Activated B cell treated with CpG ODN at 0.5 μM for 24 hours (primary cell): ENCODE measurements at regions of chr12 and their contacts with region 1.

Region 1: GRCh38 chr12:25195056-25195971 is at the starts of genes DNAI7 and ETFRF1:
- DNase-seq: peak; percentile 98
- ATAC-seq: peak; percentile 97
- H3K4me3 Mint-ChIP-seq: peak within 1 kb of the TSS; percentile 94
- H3K27ac Mint-ChIP-seq: peak within 1 kb of the TSS; percentile 96
- H3K4me1 Mint-ChIP-seq: peaks cover 34% of the 10 kb centered on the region
- H3K27me3 Mint-ChIP-seq: no peaks in the 10 kb centered on the region
- CTCF ChIP-seq: no peak
- total RNA-seq, gene DNAI7: 0.15 and 0.27 TPM in 2 replicates
- total RNA-seq, gene ETFRF1: 15.4 and 17.6 TPM in 2 replicates

Region 2: GRCh38 chr12:24997970-24998582 is 197.2 kb before region 1 on chr12:
- CTCF ChIA-PET with region 1: no interaction called
- POLR2A ChIA-PET with region 1: no interaction called
- intact Hi-C with region 1: loop called (anchors 2 kb)
- DNase-seq: no peak
- ATAC-seq: peak; percentile 74
- H3K4me3 Mint-ChIP-seq: peak overlapping the region; percentile 69
- H3K27ac Mint-ChIP-seq: peak overlapping the region; percentile 97
- H3K4me1 Mint-ChIP-seq: peaks cover 90% of the 10 kb centered on the region
- H3K27me3 Mint-ChIP-seq: no peaks in the 10 kb centered on the region
- CTCF ChIP-seq: no peak

Region 3: DNA sequence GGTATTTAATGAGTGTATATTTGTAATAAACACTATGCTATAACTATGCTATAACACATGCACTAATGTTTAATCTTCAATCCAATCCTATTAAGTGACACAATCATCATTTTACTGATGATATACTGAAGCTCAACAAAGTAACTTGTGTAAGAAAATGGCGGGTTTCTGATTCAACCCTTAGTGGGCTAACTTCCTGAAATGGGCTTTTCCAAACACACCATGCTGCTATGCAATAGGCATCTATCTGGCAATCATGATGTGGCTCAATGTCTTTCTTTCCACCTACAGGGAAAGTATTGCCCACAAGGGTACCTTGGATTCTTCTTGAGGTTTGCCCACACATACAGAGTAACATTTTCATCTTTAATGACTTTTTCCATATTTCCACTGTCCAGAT is 48.6 kb before region 1 on chr12:
- CTCF ChIA-PET with region 1: no interaction called
- POLR2A ChIA-PET with region 1: no interaction called
- intact Hi-C with region 1: no loop called
- DNase-seq: no peak
- ATAC-seq: no peak
- H3K4me3 Mint-ChIP-seq: no peak overlapping the region
- H3K27ac Mint-ChIP-seq: no peak overlapping the region
- H3K4me1 Mint-ChIP-seq: no peaks in the 10 kb centered on the region
- H3K27me3 Mint-ChIP-seq: no peaks in the 10 kb centered on the region
- CTCF ChIP-seq: no peak

Region 4: DNA sequence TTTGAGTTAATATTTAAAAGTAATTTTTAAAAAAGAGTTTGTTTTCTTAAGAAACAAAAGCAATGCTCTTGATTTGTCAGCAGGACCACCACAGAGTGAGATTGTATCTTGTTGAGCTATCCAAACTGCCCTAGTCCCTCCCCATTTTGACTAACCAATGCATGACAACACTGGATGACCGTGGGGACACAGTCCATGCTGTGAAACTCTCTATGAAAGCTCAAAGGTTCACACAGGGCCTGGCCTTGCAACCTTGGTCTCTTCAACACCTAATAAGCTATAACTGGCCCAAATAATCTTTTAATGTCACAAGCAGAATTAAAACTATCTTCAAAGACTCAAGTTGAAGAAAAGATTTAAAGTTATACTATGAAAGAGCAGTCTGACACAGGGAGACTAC is 13.2 kb after region 1 on chr12:
- CTCF ChIA-PET with region 1: interaction called, 3 read pairs
- POLR2A ChIA-PET with region 1: interaction called, 5 read pairs
- intact Hi-C with region 1: loop called (anchors 2 kb)
- DNase-seq: no peak
- ATAC-seq: no peak
- H3K4me3 Mint-ChIP-seq: no peak overlapping the region
- H3K27ac Mint-ChIP-seq: no peak overlapping the region
- H3K4me1 Mint-ChIP-seq: no peaks in the 10 kb centered on the region
- H3K27me3 Mint-ChIP-seq: no peaks in the 10 kb centered on the region
- CTCF ChIP-seq: no peak